Activated T-helper 1 cell treated with anti-CD3 and anti-CD28 coated beads, Interleukin-12 subunit alpha, Interleukin-12 subunit beta, Interleukin-2, Interleukin-4 antibody, amounts not matched to agents 30 ng/mL and 10 ng/mL and 1 ng/mL, durations not matched to agents 14 hours and 24 hours and 36 hours (primary cell): ENCODE measurements at regions of chr11 and their contacts with region 1.

Region 1: DNA sequence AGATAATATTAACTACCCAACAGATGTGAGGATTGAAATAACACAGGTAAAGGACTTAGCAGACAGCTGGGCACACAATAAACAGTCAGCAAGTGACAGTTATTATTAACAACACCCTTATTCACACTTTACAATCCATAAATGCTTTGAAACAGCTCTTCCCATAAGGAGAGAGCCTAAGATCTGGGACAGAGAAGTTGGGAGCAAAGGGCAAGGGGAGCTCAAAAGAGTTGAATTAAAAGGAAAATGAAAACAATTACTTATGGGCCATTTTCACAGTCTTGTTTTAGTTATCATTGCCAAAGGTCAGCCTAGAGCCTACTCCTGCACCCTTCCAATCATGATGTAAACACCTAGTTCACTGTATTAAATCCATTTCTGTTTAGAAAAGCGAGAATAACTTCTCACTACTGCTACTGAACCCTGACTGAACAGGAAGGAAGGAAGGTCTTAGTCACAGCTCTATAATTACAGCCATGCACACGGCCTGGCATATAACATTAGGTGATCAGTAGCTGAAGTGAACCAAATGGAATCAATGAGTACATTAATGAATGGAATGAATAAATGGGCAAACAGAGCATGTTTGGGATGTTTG is 111.3 kb downstream of the PLEKHA7 start:
- DNase-seq: no peak
- H3K4me3 Mint-ChIP-seq: peak overlapping the region; percentile 28
- H3K27ac Mint-ChIP-seq: peak overlapping the region; percentile 86
- H3K4me1 Mint-ChIP-seq: peaks cover 52% of the 10 kb centered on the region
- H3K27me3 Mint-ChIP-seq: no peaks in the 10 kb centered on the region

Region 2: DNA sequence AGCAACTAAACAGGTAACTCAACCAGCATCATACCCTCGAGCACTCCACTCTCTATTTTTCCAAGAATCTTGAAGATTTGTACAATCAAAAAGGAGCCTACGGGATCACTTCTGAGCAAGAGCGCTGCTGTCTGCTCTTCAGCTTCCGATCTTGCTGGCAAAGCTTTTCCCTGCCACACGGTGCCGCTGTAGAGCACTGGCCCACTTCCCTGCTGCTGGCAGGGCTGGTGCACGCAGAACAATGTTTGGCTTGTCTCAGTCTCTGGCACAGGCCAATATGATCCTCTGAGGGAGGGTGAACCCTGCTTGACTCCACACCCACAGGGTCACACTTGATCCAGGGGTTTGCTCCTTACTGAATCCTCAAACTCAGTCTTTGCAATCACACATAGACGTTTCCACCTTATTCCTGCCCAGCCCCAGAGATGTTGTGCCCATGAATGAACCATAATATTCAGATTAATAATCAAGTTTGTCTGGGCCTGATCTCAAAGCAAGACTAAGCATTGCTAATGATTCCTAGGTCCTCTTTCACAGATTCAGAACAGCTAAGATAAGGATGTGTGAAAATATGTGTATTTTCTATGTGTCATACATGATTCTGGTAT is 1083.1 kb before region 1 on chr11:
- intact Hi-C with region 1: loop called (anchors 5 kb)
- DNase-seq: peak; percentile 9
- H3K4me3 Mint-ChIP-seq: no peak overlapping the region
- H3K27ac Mint-ChIP-seq: peak overlapping the region; percentile 3
- H3K4me1 Mint-ChIP-seq: peaks cover 15% of the 10 kb centered on the region
- H3K27me3 Mint-ChIP-seq: no peaks in the 10 kb centered on the region

Region 3: GRCh38 chr11:16825968-16826367 is 76.9 kb before region 1 on chr11:
- intact Hi-C with region 1: loop called (anchors 2 kb)
- DNase-seq: no peak
- H3K4me3 Mint-ChIP-seq: no peak overlapping the region
- H3K27ac Mint-ChIP-seq: no peak overlapping the region
- H3K4me1 Mint-ChIP-seq: peaks cover 4% of the 10 kb centered on the region
- H3K27me3 Mint-ChIP-seq: peaks cover 3% of the 10 kb centered on the region

Region 4: DNA sequence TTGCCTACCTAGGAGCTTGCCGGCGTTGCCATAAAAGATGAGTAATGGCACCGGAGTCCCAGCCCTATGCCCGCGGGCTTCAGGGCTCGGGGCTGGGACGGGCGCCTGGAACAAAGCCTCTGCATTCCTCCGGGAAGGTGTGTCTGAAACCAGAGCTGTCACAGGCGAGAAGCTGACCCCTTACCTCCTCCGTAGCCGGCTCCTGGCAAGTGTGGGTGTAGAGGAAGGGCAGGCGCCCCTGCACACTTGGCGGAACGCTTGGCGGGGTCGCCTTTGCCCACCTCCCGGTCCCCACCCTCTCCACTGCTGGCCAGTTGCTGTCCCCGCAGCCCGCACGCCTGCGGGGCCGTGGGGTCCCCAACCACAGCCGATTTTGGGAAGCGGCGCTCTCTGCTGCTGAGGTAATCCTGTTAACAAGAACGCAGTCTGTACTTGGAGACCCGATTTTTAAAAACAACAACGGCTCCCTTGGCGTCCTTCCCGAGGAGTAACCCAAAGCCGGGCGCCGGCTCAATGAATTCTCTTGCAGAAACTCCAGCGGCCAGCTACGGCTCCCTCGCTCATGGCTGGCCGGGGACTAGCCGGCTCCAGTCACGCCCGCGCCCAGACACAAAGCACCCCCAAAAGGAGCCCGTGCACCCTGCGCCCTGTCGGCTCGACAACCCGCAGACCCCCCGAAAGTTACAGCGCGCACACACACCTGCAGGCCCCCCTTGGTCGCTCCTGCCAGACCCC is 22.1 kb after region 1 on chr11:
- intact Hi-C with region 1: loop called (anchors 1 kb)
- DNase-seq: no peak
- H3K4me3 Mint-ChIP-seq: peak overlapping the region; percentile 71
- H3K27ac Mint-ChIP-seq: no peak overlapping the region
- H3K4me1 Mint-ChIP-seq: peaks cover 6% of the 10 kb centered on the region
- H3K27me3 Mint-ChIP-seq: peaks cover 56% of the 10 kb centered on the region

Region 5: GRCh38 chr11:17207317-17208258 is 304.7 kb after region 1 on chr11 and contains the start of gene PIK3C2A:
- intact Hi-C with region 1: loop called (anchors 2 kb)
- DNase-seq: peak; percentile 93
- H3K4me3 Mint-ChIP-seq: peak within 1 kb of the TSS; percentile 98
- H3K27ac Mint-ChIP-seq: peak within 1 kb of the TSS; percentile 94
- H3K4me1 Mint-ChIP-seq: peaks cover 35% of the 10 kb centered on the region
- H3K27me3 Mint-ChIP-seq: no peaks in the 10 kb centered on the region
- total RNA-seq, gene PIK3C2A: 31.7 and 31.8 TPM in 2 replicates

Region 6: GRCh38 chr11:17298302-17298701 is 395.4 kb after region 1 on chr11:
- intact Hi-C with region 1: loop called (anchors 1 kb)
- DNase-seq: peak; percentile 23
- H3K4me3 Mint-ChIP-seq: no peak overlapping the region
- H3K27ac Mint-ChIP-seq: peak overlapping the region; percentile 64
- H3K4me1 Mint-ChIP-seq: peaks cover 31% of the 10 kb centered on the region
- H3K27me3 Mint-ChIP-seq: no peaks in the 10 kb centered on the region